ENCODE measurements at regions of chr1 and their contacts with region 1.

Region 1: DNA sequence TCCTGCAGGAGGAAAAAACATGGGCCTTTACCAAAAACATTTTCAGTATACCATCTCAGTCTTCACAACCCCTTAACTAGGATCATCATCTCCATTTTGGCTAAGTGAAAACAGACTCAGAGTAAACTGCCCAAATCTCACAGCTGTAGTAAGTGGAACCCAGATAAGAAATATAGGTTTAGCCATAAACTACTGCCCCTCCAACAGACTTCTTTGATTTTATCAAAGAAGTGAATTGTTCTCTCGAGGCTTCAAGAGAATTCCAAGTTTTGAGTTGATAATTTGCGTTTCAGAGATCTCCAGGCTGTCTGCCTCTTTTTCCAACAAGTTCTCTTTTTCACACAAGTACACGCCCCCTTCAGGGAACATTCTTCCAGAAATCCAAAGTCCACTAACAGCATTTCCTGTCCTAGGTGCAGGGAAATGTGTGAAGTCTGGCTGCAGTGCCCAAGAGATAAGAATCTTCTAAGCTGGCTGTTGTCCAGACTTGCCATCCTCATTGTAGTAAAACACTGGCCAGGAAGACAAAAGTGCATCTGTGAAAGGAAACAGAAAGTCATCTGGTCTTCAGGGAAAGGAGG is 30.8 kb downstream of the RNF19B start:
- DNase-seq: peak in 1 of 3 donors; percentile 11
- H3K4me3 ChIP-seq: no peak overlapping the region
- H3K27ac ChIP-seq: no peak overlapping the region
- H3K4me1 ChIP-seq: peaks cover 0 to 23% (median 14%) of the 10 kb centered on the region in 4 experiments
- H3K27me3 ChIP-seq: peaks cover 0 to 3% (median 0%) of the 10 kb centered on the region in 5 experiments

Region 2: GRCh38 chr1:32919811-32920733 is 13.8 kb before region 1 on chr1:
- CTCF ChIA-PET with region 1: interaction called, 21 read pairs
- POLR2A ChIA-PET with region 1: no interaction called
- DNase-seq: peak in 1 of 3 donors; percentile 35
- H3K4me3 ChIP-seq: no peak overlapping the region
- H3K27ac ChIP-seq: no peak overlapping the region
- H3K4me1 ChIP-seq: peaks cover 0 to 12% (median 7%) of the 10 kb centered on the region in 4 experiments
- H3K27me3 ChIP-seq: peaks cover 5 to 61% (median 26%) of the 10 kb centered on the region in 5 experiments

Region 3: DNA sequence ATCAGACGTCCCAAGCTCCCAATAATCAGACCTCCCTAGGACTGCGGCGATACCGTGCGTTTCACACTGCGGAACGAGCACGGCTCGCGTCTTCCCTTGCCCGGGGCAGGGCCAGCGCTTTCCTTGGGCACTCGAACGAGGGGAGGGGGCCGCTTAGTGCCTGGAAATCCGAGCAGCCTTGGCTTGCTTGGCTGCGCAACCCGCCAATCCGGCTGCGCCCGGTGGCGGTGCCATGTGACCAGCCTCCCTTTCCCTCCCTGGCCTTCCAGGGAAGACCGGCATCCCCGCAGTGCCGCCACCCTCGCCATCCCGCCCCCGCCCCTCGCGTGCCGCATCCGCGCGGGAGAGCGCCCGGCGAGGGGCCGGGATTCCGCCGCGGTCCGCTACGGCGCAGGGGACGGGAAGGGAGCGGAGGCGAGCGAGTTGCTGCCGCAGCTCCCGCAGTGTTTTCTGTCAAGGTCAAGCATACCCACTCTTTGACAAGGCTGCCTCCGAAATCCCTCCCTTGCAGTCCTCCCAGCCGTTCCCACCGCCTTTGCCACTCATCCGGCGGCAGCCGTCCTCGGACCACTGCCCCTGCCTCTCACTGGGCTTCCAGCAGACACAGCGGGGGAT is 39.1 kb after region 1 on chr1:
- CTCF ChIA-PET with region 1: no interaction called
- POLR2A ChIA-PET with region 1: no interaction called
- DNase-seq: peak in 1 of 3 donors; percentile 38
- H3K4me3 ChIP-seq: peak overlapping the region; percentile 40 to 79 (median 58)
- H3K27ac ChIP-seq: no peak overlapping the region
- H3K4me1 ChIP-seq: peaks cover 2 to 10% (median 8%) of the 10 kb centered on the region in 4 experiments
- H3K27me3 ChIP-seq: peaks cover 6 to 27% (median 13%) of the 10 kb centered on the region in 5 experiments

Region 4: GRCh38 chr1:32992489-32993323 is 58.9 kb after region 1 on chr1:
- CTCF ChIA-PET with region 1: interaction called, 10 read pairs
- POLR2A ChIA-PET with region 1: no interaction called
- DNase-seq: peak; percentile 96 to 99 (median 99)
- H3K4me3 ChIP-seq: peak overlapping the region in 2 of 7 experiments; percentile 24 to 41
- H3K27ac ChIP-seq: peak overlapping the region; percentile 4 to 41
- H3K4me1 ChIP-seq: peaks cover 27 to 79% (median 57%) of the 10 kb centered on the region in 4 experiments
- H3K27me3 ChIP-seq: no peaks in the 10 kb centered on the region

Region 5: DNA sequence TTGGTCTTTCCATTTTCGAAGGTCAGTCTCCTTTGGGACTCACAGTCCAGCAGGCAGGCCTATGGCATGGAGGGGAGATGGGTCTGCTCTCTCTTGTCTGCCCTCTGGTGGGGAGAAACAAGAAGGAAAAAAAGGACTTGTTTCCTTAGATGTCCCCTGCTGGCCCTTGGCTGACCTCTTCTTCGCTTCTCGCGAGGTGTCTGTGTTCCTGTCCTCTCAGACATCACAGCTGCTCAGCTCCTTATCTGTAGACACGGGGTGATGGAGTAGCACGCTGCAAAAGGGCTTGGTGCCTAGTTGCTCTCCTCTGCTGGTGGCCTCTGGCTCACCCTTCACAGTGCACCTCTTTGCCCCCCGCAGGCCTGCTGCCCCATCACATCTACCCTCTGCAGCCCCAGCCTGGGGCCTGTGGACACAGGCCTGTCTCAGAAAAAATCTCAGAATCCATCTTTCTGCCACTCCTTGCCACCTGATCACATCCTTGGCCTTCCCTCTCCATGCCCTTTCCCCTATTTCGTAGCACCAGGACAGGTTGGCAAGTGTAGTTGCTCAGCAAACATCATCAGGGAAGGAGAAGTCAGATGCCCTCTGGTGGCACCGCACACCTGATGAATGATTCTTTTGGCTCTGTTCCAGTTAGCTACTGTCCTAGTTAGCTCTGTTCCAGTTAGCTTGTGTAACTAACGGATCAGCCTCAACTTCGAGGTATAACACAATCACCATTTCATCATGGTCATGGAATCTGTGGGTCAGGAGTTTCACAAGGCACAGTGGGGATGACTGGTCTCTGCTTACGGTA is 121.6 kb after region 1 on chr1:
- CTCF ChIA-PET with region 1: interaction called, 86 read pairs
- POLR2A ChIA-PET with region 1: no interaction called
- DNase-seq: peak; percentile 69 to 79 (median 74)
- H3K4me3 ChIP-seq: no peak overlapping the region
- H3K27ac ChIP-seq: no peak overlapping the region
- H3K4me1 ChIP-seq: peaks cover 2 to 10% (median 3%) of the 10 kb centered on the region in 4 experiments
- H3K27me3 ChIP-seq: no peaks in the 10 kb centered on the region

Region 6: GRCh38 chr1:33086384-33086850 is 152.6 kb after region 1 on chr1:
- CTCF ChIA-PET with region 1: interaction called, 35 read pairs
- POLR2A ChIA-PET with region 1: no interaction called
- DNase-seq: peak; percentile 67 to 81 (median 77)
- H3K4me3 ChIP-seq: no peak overlapping the region
- H3K27ac ChIP-seq: no peak overlapping the region
- H3K4me1 ChIP-seq: peaks cover 5 to 29% (median 18%) of the 10 kb centered on the region in 4 experiments
- H3K27me3 ChIP-seq: peaks cover 0 to 37% (median 23%) of the 10 kb centered on the region in 5 experiments

Measured in common myeloid progenitor, CD34-positive (primary cell).